ENCODE measurements at regions of chr10 and their contacts with region 1.

Region 1: DNA sequence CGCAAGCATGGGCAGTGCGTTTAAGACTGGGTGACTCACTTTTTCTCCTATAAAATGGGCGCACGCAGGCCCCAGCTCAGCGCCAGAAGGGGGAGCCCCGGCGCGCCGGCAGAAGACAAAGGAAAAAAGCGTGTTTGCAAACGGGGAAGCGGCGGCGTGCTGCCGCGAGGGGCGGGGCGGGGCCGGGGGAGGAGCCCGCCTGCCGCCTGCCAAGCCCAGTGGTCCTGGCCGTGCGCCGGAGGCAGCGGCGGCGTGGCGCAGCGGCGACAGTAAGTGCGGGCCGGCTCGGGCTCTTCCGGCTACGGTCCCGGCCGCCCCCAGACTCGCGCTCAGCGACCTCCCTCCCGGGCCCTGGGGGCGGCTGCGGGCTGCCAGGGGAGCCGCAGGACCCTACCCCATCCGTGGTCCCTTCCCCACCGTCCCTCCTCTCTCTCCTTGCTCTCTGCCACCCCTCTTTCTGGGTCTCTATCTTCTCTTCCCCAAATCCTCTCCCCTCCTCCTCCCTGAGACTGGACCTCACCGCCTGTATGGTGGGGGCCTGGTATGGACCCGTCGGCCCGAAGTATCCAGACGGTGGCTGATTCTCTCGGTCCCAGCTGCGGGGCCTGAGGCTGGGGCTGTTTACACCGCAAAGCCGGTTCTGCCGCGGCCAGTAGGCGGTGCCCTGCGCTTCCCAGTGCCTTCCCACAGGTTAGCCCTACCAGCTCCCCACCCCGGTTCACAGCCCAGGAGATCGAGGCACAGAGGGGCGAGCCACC is at the start of gene SLC29A3:
- DNase-seq: peak; percentile 87
- H3K4me3 ChIP-seq: peak within 1 kb of the TSS; percentile 67
- H3K27ac ChIP-seq: peak within 1 kb of the TSS; percentile 41
- H3K4me1 ChIP-seq: peaks cover 6% of the 10 kb centered on the region
- H3K27me3 ChIP-seq: no peaks in the 10 kb centered on the region
- CTCF ChIP-seq: peak; percentile 54
- total RNA-seq, gene SLC29A3: 3.8 to 6.5 TPM

Region 2: DNA sequence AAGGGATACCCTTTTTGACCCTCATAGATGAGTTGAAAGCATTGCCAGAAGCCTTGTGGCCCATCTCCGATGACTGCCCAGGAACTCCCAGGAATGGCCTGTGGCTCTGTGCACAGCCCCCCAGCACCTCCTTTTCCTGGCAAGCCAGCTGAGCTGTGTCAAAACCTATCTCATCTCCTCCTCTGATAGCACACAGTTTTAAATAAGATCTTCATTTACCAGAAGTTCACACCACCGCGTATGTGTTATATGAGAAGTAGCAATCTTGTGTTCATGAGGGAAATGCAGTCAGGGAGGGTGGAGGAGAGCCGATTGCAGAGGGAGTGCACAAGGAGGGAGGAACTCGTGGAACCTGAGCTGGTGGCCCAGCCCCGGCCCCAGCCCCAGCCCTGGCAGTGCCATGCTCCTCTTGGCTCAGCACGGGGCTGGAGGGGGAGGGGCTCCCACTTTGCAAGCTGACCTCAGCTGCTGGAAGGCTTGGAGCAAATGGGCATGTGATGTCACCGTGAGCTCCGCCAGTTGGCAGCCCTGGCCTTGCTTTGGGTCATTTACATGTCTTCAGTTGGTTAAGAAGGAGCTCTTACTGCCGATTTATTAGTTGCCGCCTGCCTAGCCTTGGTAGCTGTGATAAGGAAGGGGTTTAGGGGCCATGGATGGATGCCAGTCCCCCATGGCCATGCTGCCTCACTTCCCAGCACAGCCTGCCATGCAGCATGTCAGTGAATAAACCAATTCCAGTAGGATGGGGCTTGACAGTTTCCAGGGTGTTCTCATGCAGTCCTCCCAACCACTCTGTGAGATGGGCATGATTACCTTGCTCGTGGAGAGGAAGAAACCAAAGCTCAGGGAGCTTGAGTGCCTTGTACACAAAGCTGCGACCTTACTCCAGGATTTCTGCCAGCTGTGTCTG is 86.9 kb before region 1 on chr10:
- intact Hi-C with region 1: no loop called
- DNase-seq: no peak
- H3K4me3 ChIP-seq: no peak overlapping the region
- H3K27ac ChIP-seq: no peak overlapping the region
- H3K4me1 ChIP-seq: peaks cover 4% of the 10 kb centered on the region
- H3K27me3 ChIP-seq: no peaks in the 10 kb centered on the region
- CTCF ChIP-seq: no peak

Region 3: GRCh38 chr10:71378336-71379117 is 59.3 kb after region 1 on chr10:
- intact Hi-C with region 1: loop called (anchors 5 kb)
- DNase-seq: peak; percentile 24
- H3K4me3 ChIP-seq: no peak overlapping the region
- H3K27ac ChIP-seq: peak overlapping the region; percentile 15
- H3K4me1 ChIP-seq: peaks cover 15% of the 10 kb centered on the region
- H3K27me3 ChIP-seq: no peaks in the 10 kb centered on the region
- CTCF ChIP-seq: no peak

Region 4: DNA sequence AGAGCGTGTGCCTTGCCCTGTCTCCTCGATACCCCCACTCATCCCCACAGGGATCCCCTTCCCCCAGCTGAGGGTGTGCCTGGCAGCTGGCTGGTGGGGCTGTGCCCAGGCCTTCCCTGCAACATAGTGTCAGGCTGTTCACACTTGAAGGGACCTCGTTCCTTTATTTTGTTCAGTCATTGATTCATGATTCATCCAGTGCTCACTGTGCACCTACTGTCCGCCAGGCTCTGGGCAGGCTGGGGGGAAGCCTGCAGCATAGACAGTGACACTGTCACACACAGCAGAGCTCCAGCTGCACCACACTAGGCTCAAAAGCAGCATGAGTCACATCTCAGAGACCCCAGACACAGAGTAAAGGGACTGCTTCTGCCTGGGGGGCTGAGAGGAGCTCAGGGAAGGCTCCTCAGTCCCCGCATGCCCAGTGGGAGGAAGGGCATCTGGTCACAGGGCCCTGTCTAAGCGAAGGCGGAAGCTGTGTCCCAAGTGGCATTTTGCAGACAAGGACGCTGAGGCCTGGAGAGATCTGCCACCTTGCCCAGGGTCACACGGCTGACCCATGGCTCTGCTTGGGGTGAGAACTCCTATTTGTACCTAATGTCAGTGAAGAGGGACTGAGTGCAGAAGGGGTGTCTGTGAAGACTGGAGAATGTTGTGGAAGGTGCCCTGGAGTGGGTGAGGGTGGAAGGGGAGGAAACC is 105.4 kb after region 1 on chr10:
- intact Hi-C with region 1: no loop called
- DNase-seq: no peak
- H3K4me3 ChIP-seq: no peak overlapping the region
- H3K27ac ChIP-seq: no peak overlapping the region
- H3K4me1 ChIP-seq: no peaks in the 10 kb centered on the region
- H3K27me3 ChIP-seq: no peaks in the 10 kb centered on the region
- CTCF ChIP-seq: no peak

Region 5: GRCh38 chr10:71494980-71495381 is 175.8 kb after region 1 on chr10:
- intact Hi-C with region 1: loop called (anchors 10 kb)
- DNase-seq: no peak
- H3K4me3 ChIP-seq: no peak overlapping the region
- H3K27ac ChIP-seq: no peak overlapping the region
- H3K4me1 ChIP-seq: no peaks in the 10 kb centered on the region
- H3K27me3 ChIP-seq: no peaks in the 10 kb centered on the region
- CTCF ChIP-seq: no peak

Region 6: DNA sequence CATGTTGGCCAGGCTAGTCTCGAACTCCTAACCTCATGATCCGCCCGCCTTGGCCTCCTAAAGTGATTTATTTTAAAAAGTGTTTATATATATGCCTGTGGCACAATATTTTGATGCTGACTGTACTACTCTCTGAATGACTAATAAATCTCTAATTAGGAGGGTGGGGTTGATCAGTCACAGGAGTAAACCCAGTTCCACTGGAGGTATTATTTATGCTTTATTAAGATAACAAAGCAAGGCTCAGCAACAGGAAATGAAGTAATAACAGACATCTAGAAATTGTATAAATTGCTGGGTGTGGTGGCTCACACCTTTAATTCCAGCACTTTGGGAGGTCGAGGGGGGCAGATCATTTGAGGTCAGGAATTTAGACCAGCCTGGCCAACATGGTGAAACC is 1346.7 kb after region 1 on chr10:
- intact Hi-C with region 1: no loop called
- DNase-seq: no peak
- H3K4me3 ChIP-seq: no peak overlapping the region
- H3K27ac ChIP-seq: no peak overlapping the region
- H3K4me1 ChIP-seq: peaks cover 3% of the 10 kb centered on the region
- H3K27me3 ChIP-seq: no peaks in the 10 kb centered on the region
- CTCF ChIP-seq: no peak